ENCODE measurements at regions of chr15 and their contacts with region 1.

Region 1: DNA sequence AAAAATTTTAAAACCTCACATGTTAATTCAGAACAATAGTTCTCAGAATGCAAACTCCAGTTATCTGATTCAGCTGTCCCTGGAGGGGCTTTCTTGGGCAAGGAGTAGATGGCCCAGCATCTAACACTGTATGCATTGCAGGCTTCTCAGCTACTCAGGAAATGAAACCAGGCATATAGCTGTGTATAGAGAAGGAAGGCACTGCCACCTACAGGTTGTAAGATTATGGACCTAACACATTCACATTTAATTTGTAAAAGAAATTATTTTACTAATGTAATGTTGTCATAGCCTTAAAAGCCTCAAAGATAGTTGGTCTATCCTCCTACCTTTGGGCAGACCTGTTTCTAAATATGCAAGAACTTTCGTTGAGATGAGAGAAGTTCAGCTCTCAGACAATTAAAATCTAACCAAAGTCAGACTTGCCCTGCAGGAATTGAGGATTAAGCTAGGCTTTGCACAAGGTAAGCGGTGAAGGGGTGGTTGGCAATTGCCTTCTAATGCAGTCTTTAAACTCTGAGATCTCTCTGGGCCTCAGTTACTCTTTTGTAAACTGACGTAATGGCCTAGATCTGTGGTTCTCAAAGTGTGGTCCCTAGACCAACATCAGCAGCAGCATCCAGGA is 132.8 kb upstream of the SLC24A5 start:
- DNase-seq: no peak
- H3K4me3 Mint-ChIP-seq: no peak overlapping the region
- H3K27ac Mint-ChIP-seq: no peak overlapping the region
- H3K4me1 Mint-ChIP-seq: no peaks in the 10 kb centered on the region
- H3K27me3 Mint-ChIP-seq: no peaks in the 10 kb centered on the region

Region 2: DNA sequence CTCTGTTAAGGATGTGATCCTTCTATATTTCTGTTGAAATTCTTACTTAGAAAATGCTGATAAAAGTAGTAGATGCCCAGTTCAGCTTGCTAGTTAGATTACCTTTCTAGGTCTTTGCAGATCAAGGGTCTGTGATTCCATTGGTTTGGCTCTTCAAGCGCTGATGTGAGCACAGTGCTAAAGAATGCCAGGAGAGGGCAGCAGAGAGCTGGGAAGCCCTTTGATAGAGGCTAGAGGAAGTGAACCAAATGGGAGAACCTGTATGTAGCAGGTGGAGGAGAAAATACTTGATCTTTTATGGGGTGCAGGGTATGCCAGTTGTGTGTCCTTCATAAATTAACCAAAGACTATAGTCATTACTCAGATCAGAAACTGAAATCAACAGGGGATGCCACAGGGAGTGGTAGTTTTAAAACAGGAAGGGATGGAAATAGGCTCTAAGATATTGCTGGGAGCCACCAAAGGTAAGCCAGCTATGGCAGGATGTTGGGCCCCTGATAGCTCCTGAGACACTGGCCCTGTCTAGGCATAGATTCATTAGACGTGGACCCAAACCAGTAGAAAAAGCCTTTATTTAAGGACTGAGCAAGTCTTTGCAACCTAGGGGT is 1675.8 kb before region 1 on chr15:
- CTCF ChIA-PET with region 1: interaction called, 3 read pairs
- POLR2A ChIA-PET with region 1: no interaction called
- intact Hi-C with region 1: loop called (anchors 10 kb)
- DNase-seq: peak; percentile 69
- H3K4me3 Mint-ChIP-seq: no peak overlapping the region
- H3K27ac Mint-ChIP-seq: no peak overlapping the region
- H3K4me1 Mint-ChIP-seq: no peaks in the 10 kb centered on the region
- H3K27me3 Mint-ChIP-seq: peaks cover 2% of the 10 kb centered on the region

Region 3: DNA sequence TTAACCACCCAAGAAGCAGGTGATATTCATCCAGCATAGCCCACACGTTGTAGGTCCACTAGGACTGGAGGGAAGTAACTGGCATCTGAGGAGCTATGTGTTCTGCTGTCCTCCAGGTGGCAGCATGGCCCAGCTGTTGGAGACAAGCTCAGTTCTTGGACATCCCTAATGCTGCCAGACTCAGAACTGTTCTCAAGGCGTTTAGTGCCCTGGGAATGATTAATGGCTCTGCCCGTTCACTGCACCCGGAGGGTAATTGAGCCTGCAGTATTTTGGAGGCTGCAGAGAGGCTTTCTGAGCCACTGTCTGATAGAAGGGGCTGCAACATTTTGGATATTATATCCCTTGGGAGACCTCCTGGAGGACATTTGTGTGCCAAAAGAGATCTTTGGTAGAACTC is 792.0 kb before region 1 on chr15:
- CTCF ChIA-PET with region 1: interaction called, 14 read pairs
- POLR2A ChIA-PET with region 1: no interaction called
- intact Hi-C with region 1: loop called (anchors 1 kb)
- DNase-seq: peak; percentile 56
- H3K4me3 Mint-ChIP-seq: no peak overlapping the region
- H3K27ac Mint-ChIP-seq: no peak overlapping the region
- H3K4me1 Mint-ChIP-seq: no peaks in the 10 kb centered on the region
- H3K27me3 Mint-ChIP-seq: peaks cover 1% of the 10 kb centered on the region

Region 4: DNA sequence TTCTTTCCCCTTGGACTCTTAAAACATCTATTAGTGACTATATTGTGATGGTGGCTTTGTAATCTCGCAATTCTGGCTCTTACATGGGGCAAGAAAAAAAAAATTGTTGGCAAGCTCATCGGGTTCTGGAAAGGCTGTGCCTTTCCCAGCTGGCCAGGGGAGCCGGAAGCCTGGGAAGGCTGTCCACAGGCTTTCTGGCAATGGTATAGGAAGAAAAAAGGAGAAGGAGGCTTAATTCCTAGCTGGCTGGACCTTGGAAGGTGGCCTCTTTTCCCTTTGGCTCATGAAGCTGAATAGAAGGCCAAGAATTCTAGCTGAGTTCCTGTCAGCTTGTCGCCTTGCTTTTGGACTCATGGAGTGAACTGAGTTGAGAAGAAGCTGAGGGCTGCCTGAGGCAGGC is 514.2 kb before region 1 on chr15:
- CTCF ChIA-PET with region 1: no interaction called
- POLR2A ChIA-PET with region 1: no interaction called
- intact Hi-C with region 1: loop called (anchors 5 kb)
- DNase-seq: no peak
- H3K4me3 Mint-ChIP-seq: no peak overlapping the region
- H3K27ac Mint-ChIP-seq: no peak overlapping the region
- H3K4me1 Mint-ChIP-seq: no peaks in the 10 kb centered on the region
- H3K27me3 Mint-ChIP-seq: no peaks in the 10 kb centered on the region

Region 5: DNA sequence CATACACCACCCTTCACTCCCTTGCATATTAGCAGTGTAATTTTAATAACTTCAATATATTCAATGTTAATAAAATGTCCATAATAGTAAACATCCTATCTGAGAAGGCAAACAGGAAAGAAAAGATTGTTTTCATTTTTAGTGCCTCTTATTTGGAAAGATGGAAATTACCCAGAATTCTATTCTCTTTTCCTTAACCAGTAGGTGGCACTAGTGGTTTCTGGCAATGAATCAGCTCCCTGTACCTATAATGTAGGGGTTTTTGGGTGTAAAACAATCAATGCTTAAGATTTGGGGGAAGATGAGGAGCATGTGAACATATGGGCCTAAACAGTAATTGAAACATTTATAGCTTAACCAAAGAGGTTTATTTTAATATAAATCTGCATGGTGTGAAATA is 276.4 kb before region 1 on chr15:
- CTCF ChIA-PET with region 1: interaction called, 9 read pairs
- POLR2A ChIA-PET with region 1: no interaction called
- intact Hi-C with region 1: loop called (anchors 2 kb)
- DNase-seq: no peak
- H3K4me3 Mint-ChIP-seq: no peak overlapping the region
- H3K27ac Mint-ChIP-seq: no peak overlapping the region
- H3K4me1 Mint-ChIP-seq: no peaks in the 10 kb centered on the region
- H3K27me3 Mint-ChIP-seq: peaks cover 13% of the 10 kb centered on the region

Region 6: DNA sequence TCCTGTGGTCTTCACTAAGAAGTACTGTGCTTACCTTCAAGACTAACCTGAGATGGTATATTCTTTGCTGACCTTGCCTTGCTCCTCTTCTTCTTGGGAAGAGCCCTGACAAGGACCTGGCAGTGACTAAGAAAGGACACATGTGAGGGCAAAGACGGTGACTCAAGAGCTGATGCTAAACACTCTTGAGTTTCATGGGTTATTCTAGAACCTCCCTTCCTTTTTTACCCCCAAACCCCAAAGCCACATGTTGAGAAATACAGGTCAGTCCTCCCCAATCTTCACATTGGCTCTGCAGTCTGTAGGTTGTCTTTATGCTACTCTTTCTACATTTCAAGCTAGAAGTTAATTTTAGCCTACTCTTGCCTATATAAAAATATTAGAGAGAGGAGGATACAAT is 70.1 kb before region 1 on chr15:
- CTCF ChIA-PET with region 1: no interaction called
- POLR2A ChIA-PET with region 1: no interaction called
- intact Hi-C with region 1: loop called (anchors 2 kb)
- DNase-seq: no peak
- H3K4me3 Mint-ChIP-seq: no peak overlapping the region
- H3K27ac Mint-ChIP-seq: no peak overlapping the region
- H3K4me1 Mint-ChIP-seq: no peaks in the 10 kb centered on the region
- H3K27me3 Mint-ChIP-seq: no peaks in the 10 kb centered on the region

Region 7: GRCh38 chr15:48250640-48251076 is 262.6 kb after region 1 on chr15:
- CTCF ChIA-PET with region 1: no interaction called
- POLR2A ChIA-PET with region 1: no interaction called
- intact Hi-C with region 1: loop called (anchors 5 kb)
- DNase-seq: peak; percentile 12
- H3K4me3 Mint-ChIP-seq: no peak overlapping the region
- H3K27ac Mint-ChIP-seq: no peak overlapping the region
- H3K4me1 Mint-ChIP-seq: no peaks in the 10 kb centered on the region
- H3K27me3 Mint-ChIP-seq: peaks cover 13% of the 10 kb centered on the region

Measured in activated CD4-positive, alpha-beta memory T cell treated with anti-CD3 and anti-CD28 coated beads for 36 hours (primary cell).